ENCODE measurements at regions of chr4 and their contacts with region 1.

Region 1: GRCh38 chr4:145808021-145808650 is 128.2 kb downstream of the C4orf51 start:
- DNase-seq: peak; percentile 65
- ATAC-seq: peak; percentile 82
- H3K4me3 Mint-ChIP-seq: peak overlapping the region; percentile 39
- H3K27ac Mint-ChIP-seq: peak overlapping the region; percentile 95
- H3K4me1 Mint-ChIP-seq: peaks cover 59% of the 10 kb centered on the region
- H3K27me3 Mint-ChIP-seq: no peaks in the 10 kb centered on the region

Region 2: GRCh38 chr4:145732895-145733880 is 74.9 kb before region 1 on chr4:
- CTCF ChIA-PET with region 1: no interaction called
- POLR2A ChIA-PET with region 1: no interaction called
- intact Hi-C with region 1: loop called in 1 of 2 experiments (anchors 1 kb)
- DNase-seq: peak; percentile 92
- ATAC-seq: peak; percentile 92
- H3K4me3 Mint-ChIP-seq: peak overlapping the region; percentile 65
- H3K27ac Mint-ChIP-seq: peak overlapping the region; percentile 56
- H3K4me1 Mint-ChIP-seq: peaks cover 23% of the 10 kb centered on the region
- H3K27me3 Mint-ChIP-seq: no peaks in the 10 kb centered on the region

Region 3: DNA sequence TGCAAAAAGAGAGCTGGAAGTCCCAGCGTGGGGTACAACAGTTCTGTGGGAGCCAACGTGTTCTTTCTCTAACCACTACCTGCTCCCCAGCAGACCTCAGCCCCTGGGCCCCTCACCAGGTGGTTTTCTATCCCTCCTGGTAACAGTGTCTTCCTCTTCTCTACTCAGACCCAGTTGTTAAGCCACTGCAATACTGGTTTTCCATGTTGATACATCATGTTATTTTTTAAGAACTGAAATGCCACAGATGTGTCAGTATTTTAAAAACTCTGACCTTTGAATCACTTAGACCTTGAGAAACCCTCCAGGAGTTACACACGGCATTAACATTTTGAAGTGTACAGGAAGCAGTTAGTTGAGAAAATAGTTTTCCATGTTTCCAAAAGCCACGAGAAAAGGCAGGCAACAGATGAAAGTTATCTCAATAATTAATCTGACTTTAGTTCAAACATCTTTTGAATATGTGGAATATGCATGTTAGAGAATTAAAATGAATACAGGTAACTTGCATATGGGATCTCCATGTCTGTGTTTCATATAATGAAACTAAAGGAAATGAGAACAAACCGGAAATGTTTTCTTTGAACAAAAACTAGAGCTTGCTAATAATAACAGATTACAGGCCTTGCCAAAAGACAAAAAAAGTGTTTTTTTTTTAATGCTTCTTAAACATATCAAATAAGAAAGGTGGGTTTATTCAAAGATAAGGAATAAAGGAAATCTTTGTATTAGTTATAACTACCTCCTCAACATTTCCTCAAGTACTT is 21.7 kb after region 1 on chr4:
- CTCF ChIA-PET with region 1: interaction called, 6 read pairs
- POLR2A ChIA-PET with region 1: interaction called, 3 read pairs
- intact Hi-C with region 1: loop called (anchors 1 kb)
- DNase-seq: peak; percentile 68
- ATAC-seq: peak; percentile 68
- H3K4me3 Mint-ChIP-seq: peak overlapping the region; percentile 43
- H3K27ac Mint-ChIP-seq: peak overlapping the region; percentile 77
- H3K4me1 Mint-ChIP-seq: peaks cover 44% of the 10 kb centered on the region
- H3K27me3 Mint-ChIP-seq: no peaks in the 10 kb centered on the region

Region 4: GRCh38 chr4:145936142-145936996 is 128.2 kb after region 1 on chr4:
- CTCF ChIA-PET with region 1: no interaction called
- POLR2A ChIA-PET with region 1: no interaction called
- intact Hi-C with region 1: loop called (anchors 1 to 2 kb)
- DNase-seq: peak; percentile 77
- ATAC-seq: peak; percentile 41
- H3K4me3 Mint-ChIP-seq: peak overlapping the region; percentile 97
- H3K27ac Mint-ChIP-seq: peak overlapping the region; percentile 93
- H3K4me1 Mint-ChIP-seq: peaks cover 54% of the 10 kb centered on the region
- H3K27me3 Mint-ChIP-seq: no peaks in the 10 kb centered on the region

Region 5: GRCh38 chr4:146175541-146176453 is 367.7 kb after region 1 on chr4 and contains the start of gene LSM6:
- CTCF ChIA-PET with region 1: no interaction called
- POLR2A ChIA-PET with region 1: no interaction called
- intact Hi-C with region 1: loop called in 1 of 2 experiments (anchors 2 kb)
- DNase-seq: peak; percentile 91
- ATAC-seq: peak; percentile 94
- H3K4me3 Mint-ChIP-seq: peak within 1 kb of the TSS; percentile 82
- H3K27ac Mint-ChIP-seq: peak within 1 kb of the TSS; percentile 85
- H3K4me1 Mint-ChIP-seq: peaks cover 49% of the 10 kb centered on the region
- H3K27me3 Mint-ChIP-seq: no peaks in the 10 kb centered on the region
- total RNA-seq, gene LSM6: 64.9 to 66.9 TPM